ENCODE measurements at regions of chr5 and their contacts with region 1.

Region 1: GRCh38 chr5:97670447-97670846 is 487.4 kb upstream of the RIOK2 start:
- DNase-seq: no peak
- ATAC-seq: no peak
- H3K4me3 ChIP-seq: no peak overlapping the region
- H3K27ac ChIP-seq: no peak overlapping the region
- H3K4me1 ChIP-seq: no peaks in the 10 kb centered on the region
- H3K27me3 ChIP-seq: no peaks in the 10 kb centered on the region
- CTCF ChIP-seq: no peak

Region 2: GRCh38 chr5:97601651-97602050 is 68.8 kb before region 1 on chr5:
- intact Hi-C with region 1: loop called in 1 of 10 experiments (anchors 2 kb)
- DNase-seq: no peak
- ATAC-seq: no peak
- H3K4me3 ChIP-seq: no peak overlapping the region
- H3K27ac ChIP-seq: no peak overlapping the region
- H3K4me1 ChIP-seq: no peaks in the 10 kb centered on the region
- H3K27me3 ChIP-seq: no peaks in the 10 kb centered on the region
- CTCF ChIP-seq: no peak